ENCODE measurements at regions of chr7 and their contacts with region 1.

Region 1: DNA sequence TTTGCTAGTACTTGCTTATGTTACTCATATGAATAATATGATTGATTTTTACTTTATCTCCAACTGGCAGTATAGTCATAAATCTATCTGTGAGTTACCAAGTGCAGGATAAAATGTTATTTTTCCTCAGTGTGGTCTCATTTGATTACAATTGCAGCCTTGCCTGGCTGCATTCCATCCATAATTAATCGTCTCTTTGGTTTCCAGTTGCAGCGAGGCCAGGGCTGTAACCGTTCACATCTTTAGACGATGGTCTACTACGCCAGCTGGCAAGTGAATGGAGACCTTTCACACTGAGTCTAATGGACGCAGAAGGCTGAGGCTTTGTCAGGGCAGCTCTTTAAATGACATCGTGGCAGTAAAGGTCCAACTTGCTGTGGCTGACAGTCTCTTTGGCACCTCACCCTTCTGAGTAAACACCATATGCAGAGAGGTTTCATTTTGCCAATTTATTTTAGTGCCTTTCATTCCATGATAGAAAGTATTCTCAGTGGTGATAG is 84.0 kb downstream of the ARL4A start:
- DNase-seq: peak; percentile 99
- H3K4me3 ChIP-seq: peak overlapping the region in 1 of 3 experiments; percentile 38
- H3K27ac ChIP-seq: peak overlapping the region; percentile 95
- H3K4me1 ChIP-seq: peaks cover 33% of the 10 kb centered on the region
- H3K27me3 ChIP-seq: no peaks in the 10 kb centered on the region
- CTCF ChIP-seq: no peak
- POLR2A ChIP-seq: peak; percentile 81

Region 2: GRCh38 chr7:12715372-12716133 is 55.9 kb before region 1 on chr7:
- CTCF ChIA-PET with region 1: interaction called, 5 read pairs
- POLR2A ChIA-PET with region 1: no interaction called
- dilution Hi-C with region 1: no loop called
- intact Hi-C with region 1: loop called (anchors 1 kb)
- DNase-seq: peak; percentile 96
- H3K4me3 ChIP-seq: peak overlapping the region in 1 of 3 experiments; percentile 1
- H3K27ac ChIP-seq: peak overlapping the region; percentile 58
- H3K4me1 ChIP-seq: peaks cover 39% of the 10 kb centered on the region
- H3K27me3 ChIP-seq: no peaks in the 10 kb centered on the region
- CTCF ChIP-seq: no peak
- POLR2A ChIP-seq: peak; percentile 64

Region 3: DNA sequence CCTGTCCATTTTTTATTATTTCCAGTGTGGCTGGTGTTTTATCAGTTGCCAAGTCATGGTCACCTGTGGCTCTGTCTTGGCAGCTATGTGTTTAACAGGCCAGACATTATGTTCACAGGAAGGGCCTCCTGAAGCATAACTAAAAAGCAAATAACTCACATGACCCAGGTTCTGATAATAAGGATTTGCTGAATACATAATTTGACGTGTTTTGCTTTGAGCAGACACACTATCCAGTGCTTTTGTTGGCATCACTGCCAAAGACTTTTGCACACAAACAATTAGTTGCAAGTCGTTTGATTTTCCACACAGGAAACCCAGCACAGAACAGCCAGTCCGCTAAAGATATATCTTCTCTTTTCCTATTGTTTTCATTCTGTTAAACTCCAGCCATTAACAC is 89.6 kb after region 1 on chr7:
- CTCF ChIA-PET with region 1: interaction called, 3 read pairs
- POLR2A ChIA-PET with region 1: no interaction called
- dilution Hi-C with region 1: no loop called
- intact Hi-C with region 1: loop called (anchors 1 kb)
- DNase-seq: peak; percentile 99
- H3K4me3 ChIP-seq: no peak overlapping the region
- H3K27ac ChIP-seq: peak overlapping the region; percentile 76
- H3K4me1 ChIP-seq: peaks cover 17% of the 10 kb centered on the region
- H3K27me3 ChIP-seq: no peaks in the 10 kb centered on the region
- CTCF ChIP-seq: no peak
- POLR2A ChIP-seq: no peak

Region 4: DNA sequence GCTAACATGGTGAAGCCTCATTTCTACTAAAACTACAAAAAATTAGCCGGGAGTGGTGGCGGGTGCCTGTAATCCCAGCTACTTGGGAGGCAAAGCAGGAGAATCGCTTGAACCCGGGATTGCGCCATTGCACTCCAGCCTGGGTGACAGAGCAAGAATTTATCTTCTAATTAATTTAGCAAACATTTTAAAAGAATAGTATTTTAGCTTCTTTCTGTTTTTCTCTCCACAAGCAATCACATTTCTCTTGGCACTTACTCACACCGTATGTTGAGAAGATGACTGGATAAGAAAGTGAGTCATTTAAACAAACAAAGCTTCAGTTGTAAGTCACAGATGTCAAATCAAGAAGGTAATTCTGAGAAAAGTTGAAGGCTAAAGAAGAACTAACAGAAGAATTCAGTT is 180.0 kb after region 1 on chr7:
- CTCF ChIA-PET with region 1: no interaction called
- POLR2A ChIA-PET with region 1: no interaction called
- dilution Hi-C with region 1: no loop called
- intact Hi-C with region 1: loop called (anchors 2 kb)
- DNase-seq: peak; percentile 83
- H3K4me3 ChIP-seq: no peak overlapping the region
- H3K27ac ChIP-seq: peak overlapping the region; percentile 24
- H3K4me1 ChIP-seq: peaks cover 11% of the 10 kb centered on the region
- H3K27me3 ChIP-seq: no peaks in the 10 kb centered on the region
- CTCF ChIP-seq: no peak
- POLR2A ChIP-seq: no peak

Region 5: GRCh38 chr7:13028825-13029099 is 257.3 kb after region 1 on chr7:
- CTCF ChIA-PET with region 1: no interaction called
- POLR2A ChIA-PET with region 1: interaction called, 3 read pairs
- dilution Hi-C with region 1: no loop called
- intact Hi-C with region 1: loop called (anchors 5 kb)
- DNase-seq: peak; percentile 80
- H3K4me3 ChIP-seq: no peak overlapping the region
- H3K27ac ChIP-seq: peak overlapping the region; percentile 47
- H3K4me1 ChIP-seq: peaks cover 18% of the 10 kb centered on the region
- H3K27me3 ChIP-seq: no peaks in the 10 kb centered on the region
- CTCF ChIP-seq: no peak
- POLR2A ChIP-seq: no peak

Region 6: DNA sequence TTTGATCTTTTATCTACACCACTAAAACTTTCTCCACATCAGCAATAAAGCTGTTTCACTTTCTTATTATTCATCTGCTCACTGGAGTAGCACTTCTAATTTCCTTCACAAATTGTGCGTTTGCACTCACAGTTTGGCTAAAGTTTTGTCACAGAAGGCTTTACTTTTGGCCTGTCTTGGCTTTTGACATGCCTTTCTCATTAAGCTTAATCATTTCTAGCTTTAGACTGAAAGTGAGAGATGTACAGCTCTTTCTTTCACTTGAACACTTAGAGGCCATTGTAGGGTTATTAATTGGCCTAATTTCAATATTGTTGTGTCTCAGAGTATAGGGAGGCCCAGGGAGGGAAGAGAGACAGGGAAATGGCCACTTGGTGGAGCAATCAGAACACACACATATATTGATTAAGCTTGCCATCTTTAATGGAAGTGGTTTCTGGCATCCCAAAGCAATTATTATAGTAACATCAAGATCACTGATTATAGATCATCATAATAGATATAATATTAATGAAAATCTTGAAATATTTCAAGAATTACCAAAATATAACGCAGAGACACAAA is 705.5 kb after region 1 on chr7:
- CTCF ChIA-PET with region 1: no interaction called
- POLR2A ChIA-PET with region 1: no interaction called
- dilution Hi-C with region 1: no loop called
- intact Hi-C with region 1: no loop called
- DNase-seq: no peak
- H3K4me3 ChIP-seq: no peak overlapping the region
- H3K27ac ChIP-seq: no peak overlapping the region
- H3K4me1 ChIP-seq: no peaks in the 10 kb centered on the region
- H3K27me3 ChIP-seq: no peaks in the 10 kb centered on the region
- CTCF ChIP-seq: no peak
- POLR2A ChIP-seq: no peak

Measured in endothelial cell of umbilical vein (primary cell).